ENCODE measurements at regions of chr3 and their contacts with region 1.

Region 1: GRCh38 chr3:57992452-57993213 is 15.6 kb upstream of the FLNB start:
- DNase-seq: no peak
- ATAC-seq: no peak
- H3K4me3 Mint-ChIP-seq: no peak overlapping the region
- H3K27ac Mint-ChIP-seq: no peak overlapping the region
- H3K4me1 Mint-ChIP-seq: no peaks in the 10 kb centered on the region
- H3K27me3 Mint-ChIP-seq: no peaks in the 10 kb centered on the region

Region 2: DNA sequence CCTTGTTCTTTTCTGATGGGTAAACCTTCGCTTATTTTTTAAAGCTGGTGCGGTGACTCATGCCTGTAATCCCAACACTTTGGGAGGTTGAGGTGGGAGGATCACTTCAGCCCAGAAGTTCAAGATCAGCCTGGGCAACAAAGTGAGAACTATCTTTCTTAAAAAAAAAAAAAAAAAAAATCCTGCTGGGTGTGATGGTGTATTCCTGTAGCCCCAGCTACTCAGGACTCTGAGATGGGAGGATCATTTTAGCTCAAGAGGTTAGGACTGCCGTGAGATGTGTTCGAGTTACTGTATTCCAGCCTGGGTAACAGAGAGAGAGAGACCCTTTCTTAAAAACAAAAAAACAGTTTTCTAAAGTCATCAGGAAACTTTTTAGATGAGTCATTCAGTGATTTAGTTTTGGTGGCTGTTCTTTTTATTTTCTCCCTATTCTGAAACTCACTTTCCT is 198.9 kb before region 1 on chr3:
- CTCF ChIA-PET with region 1: no interaction called
- POLR2A ChIA-PET with region 1: interaction called, 17 read pairs
- intact Hi-C with region 1: no loop called
- DNase-seq: no peak
- ATAC-seq: peak; percentile 60
- H3K4me3 Mint-ChIP-seq: no peak overlapping the region
- H3K27ac Mint-ChIP-seq: peak overlapping the region; percentile 16
- H3K4me1 Mint-ChIP-seq: peaks cover 39% of the 10 kb centered on the region
- H3K27me3 Mint-ChIP-seq: no peaks in the 10 kb centered on the region

Region 3: DNA sequence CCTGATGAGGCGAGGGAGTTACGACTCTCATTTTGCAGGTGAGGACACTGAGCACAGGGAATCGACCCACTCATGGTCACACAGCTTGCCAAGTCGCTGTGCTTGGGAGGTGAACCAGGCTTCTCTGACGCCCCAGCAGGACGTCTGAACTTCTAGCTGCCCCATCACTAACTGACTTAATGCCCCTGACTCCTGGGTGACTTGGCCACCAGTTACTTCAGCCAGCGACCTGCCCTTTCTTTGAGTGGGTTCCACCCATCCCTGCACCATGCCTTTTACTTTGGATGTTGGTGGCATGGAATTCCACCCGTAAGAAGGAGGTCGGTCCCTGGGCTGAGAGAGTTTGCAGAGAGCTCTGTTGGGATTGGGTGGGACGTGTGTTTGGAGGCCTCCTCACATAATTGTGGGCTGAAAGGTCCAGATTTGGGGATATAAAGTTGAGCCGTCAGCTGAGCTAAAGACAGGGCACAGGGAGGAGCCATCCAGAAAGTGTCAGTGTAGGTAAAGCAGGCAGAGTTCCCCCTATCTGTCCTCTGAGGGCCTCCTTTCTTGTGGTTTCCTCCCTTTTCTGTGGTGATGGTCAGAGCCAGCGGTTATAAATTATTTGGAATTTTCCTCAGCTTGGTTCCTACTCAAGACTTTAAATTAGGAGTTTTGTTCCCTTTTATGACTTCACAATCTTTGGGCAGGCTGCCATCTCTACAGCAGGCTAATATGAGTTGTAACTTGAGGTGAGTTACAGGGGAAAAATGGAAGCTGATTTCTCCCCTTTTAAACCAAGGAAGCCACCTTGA is 70.6 kb after region 1 on chr3:
- CTCF ChIA-PET with region 1: no interaction called
- POLR2A ChIA-PET with region 1: interaction called, 10 read pairs
- intact Hi-C with region 1: no loop called
- DNase-seq: no peak
- ATAC-seq: no peak
- H3K4me3 Mint-ChIP-seq: no peak overlapping the region
- H3K27ac Mint-ChIP-seq: no peak overlapping the region
- H3K4me1 Mint-ChIP-seq: peaks cover 14% of the 10 kb centered on the region
- H3K27me3 Mint-ChIP-seq: no peaks in the 10 kb centered on the region

Measured in activated CD4-positive, alpha-beta T cell treated with anti-CD3 and anti-CD28 coated beads for 36 hours (primary cell).